WTC11 (cell line): ENCODE measurements at regions of chr4 and their contacts with region 1.

Region 1: DNA sequence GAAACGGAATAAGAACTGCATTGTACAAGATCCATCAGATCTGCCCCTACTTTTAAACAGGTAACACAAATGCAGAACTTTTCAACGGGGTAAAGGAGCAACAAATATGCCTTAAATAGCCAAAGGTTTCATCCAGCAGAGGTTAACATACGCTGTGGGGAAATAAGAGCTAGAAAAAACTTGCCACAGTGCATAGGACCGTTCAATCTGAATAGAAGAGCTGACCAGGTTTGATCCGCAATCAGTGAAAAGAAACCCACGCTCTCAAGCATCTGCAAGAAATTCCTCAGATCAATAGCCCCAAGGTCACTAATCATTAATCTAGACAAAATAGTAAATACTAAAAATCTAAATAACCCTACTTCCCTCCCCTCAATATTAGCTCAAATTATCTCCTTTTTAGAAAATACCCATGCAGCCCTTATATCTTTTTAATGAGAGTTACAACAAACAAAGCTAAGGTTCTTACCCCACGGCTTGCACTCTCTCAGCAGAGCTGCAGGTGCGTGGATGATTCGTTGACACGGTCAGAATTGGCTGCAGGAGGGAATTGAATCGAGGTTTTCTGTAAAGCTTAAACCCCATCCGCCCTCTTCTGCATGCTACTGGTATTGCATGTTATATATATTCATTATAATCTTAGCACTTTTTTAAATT is at the start of gene TLR10:
- DNase-seq: peak; percentile 27
- ATAC-seq: peak; percentile 74
- H3K4me3 Mint-ChIP-seq: no peak within 1 kb of the TSS
- H3K27ac Mint-ChIP-seq: no peak within 1 kb of the TSS
- H3K4me1 Mint-ChIP-seq: no peaks in the 10 kb centered on the region
- H3K27me3 Mint-ChIP-seq: peaks cover 2% of the 10 kb centered on the region; the same call in 1 of the 2 replicates
- CTCF ChIP-seq: peak; percentile 58
- total RNA-seq, gene TLR10: 0.30 TPM in 1 of 3 replicates, not detected in the others

Region 2: DNA sequence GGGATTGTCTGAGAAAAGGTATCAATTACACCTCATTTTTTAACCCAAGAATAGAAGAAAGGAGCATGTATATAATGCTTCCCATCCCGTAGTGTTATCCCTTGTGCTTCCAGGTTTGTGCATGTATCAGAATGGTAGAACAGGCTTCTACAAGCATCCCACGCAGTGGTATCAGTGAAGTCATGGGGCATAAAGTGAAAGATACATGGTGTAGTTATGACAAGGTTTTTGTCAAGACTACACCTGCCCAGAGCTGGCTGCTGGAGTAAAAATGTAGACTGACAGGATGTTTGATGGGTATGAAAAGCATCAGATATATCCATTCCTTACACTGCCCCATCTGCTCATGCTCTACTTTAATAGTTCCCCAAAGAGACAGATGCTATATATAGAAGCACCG is 12.5 kb after region 1 on chr4:
- CTCF ChIA-PET with region 1: interaction called, 13 read pairs
- POLR2A ChIA-PET with region 1: no interaction called
- DNase-seq: no peak
- ATAC-seq: no peak
- H3K4me3 Mint-ChIP-seq: no peak overlapping the region
- H3K27ac Mint-ChIP-seq: no peak overlapping the region
- H3K4me1 Mint-ChIP-seq: no peaks in the 10 kb centered on the region
- H3K27me3 Mint-ChIP-seq: no peaks in the 10 kb centered on the region
- CTCF ChIP-seq: no peak